ENCODE measurements at regions of chr15 and their contacts with region 1.

Region 1: GRCh38 chr15:40684381-40684780 is 10.6 kb upstream of the RAD51 start:
- DNase-seq: no peak
- ATAC-seq: no peak
- H3K4me3 Mint-ChIP-seq: no peak overlapping the region
- H3K27ac Mint-ChIP-seq: no peak overlapping the region
- H3K4me1 Mint-ChIP-seq: no peaks in the 10 kb centered on the region
- H3K27me3 Mint-ChIP-seq: no peaks in the 10 kb centered on the region

Region 2: GRCh38 chr15:40525855-40526254 is 158.5 kb before region 1 on chr15:
- CTCF ChIA-PET with region 1: no interaction called
- DNase-seq: no peak
- ATAC-seq: no peak
- H3K4me3 Mint-ChIP-seq: no peak overlapping the region
- H3K27ac Mint-ChIP-seq: no peak overlapping the region
- H3K4me1 Mint-ChIP-seq: no peaks in the 10 kb centered on the region
- H3K27me3 Mint-ChIP-seq: peaks cover 3% of the 10 kb centered on the region

Region 3: GRCh38 chr15:40694688-40695468 is 10.5 kb after region 1 on chr15 and contains the start of gene RAD51:
- CTCF ChIA-PET with region 1: interaction called, 18 read pairs
- DNase-seq: peak; percentile 95
- ATAC-seq: peak; percentile 94
- H3K4me3 Mint-ChIP-seq: peak within 1 kb of the TSS; percentile 98
- H3K27ac Mint-ChIP-seq: peak within 1 kb of the TSS; percentile 100
- H3K4me1 Mint-ChIP-seq: peaks cover 41% of the 10 kb centered on the region
- H3K27me3 Mint-ChIP-seq: no peaks in the 10 kb centered on the region
- total RNA-seq, gene RAD51: 73.0 to 83.3 TPM